Naive thymus-derived CD4-positive, alpha-beta T cell (primary cell): ENCODE measurements at regions of chr13 and their contacts with region 1.

Region 1: DNA sequence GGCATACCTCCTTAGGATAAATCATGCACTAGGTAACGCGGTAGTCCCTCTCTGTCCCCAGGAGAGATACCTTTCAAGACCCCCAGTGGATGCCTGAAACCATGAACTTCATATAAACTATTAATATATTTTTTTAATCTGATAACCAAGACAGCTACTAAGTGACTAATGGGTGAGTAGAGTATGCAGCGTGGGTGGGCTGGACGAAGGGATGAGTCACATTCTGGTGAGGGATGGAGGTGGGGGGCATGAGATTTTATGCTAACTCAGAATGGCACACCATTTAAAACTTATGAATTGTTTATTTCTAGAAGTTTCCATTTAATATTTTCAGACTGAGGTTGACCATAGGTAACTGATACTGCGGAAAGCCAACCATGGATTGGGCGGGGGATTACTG is 46.2 kb downstream of the CDK8 start:
- DNase-seq: no peak
- ATAC-seq: no peak
- H3K4me3 ChIP-seq: no peak overlapping the region
- H3K4me3 Mint-ChIP-seq: no peak overlapping the region
- H3K27ac ChIP-seq: no peak overlapping the region
- H3K27ac Mint-ChIP-seq: no peak overlapping the region
- H3K4me1 ChIP-seq: peaks cover 0 to 4% of the 10 kb centered on the region in 2 donors
- H3K4me1 Mint-ChIP-seq: peaks cover 0 to 85% (median 70%) of the 10 kb centered on the region in 7 donors
- H3K27me3 ChIP-seq: no peaks in the 10 kb centered on the region
- H3K27me3 Mint-ChIP-seq: no peaks in the 10 kb centered on the region

Region 2: GRCh38 chr13:25286969-25287961 is 1012.9 kb before region 1 on chr13 and contains the start of gene MTMR6:
- CTCF ChIA-PET with region 1: no interaction called
- POLR2A ChIA-PET with region 1: no interaction called
- intact Hi-C with region 1: no loop called
- DNase-seq: peak; percentile 90 to 98 (median 93)
- ATAC-seq: peak; percentile 96
- H3K4me3 ChIP-seq: peak within 1 kb of the TSS; percentile 85
- H3K4me3 Mint-ChIP-seq: peak within 1 kb of the TSS; percentile 94 to 100 (median 96)
- H3K27ac ChIP-seq: peak within 1 kb of the TSS; percentile 100
- H3K27ac Mint-ChIP-seq: peak within 1 kb of the TSS; percentile 92 to 99 (median 97)
- H3K4me1 ChIP-seq: peaks cover 12 to 24% of the 10 kb centered on the region in 2 donors
- H3K4me1 Mint-ChIP-seq: peaks cover 23 to 58% (median 50%) of the 10 kb centered on the region in 7 donors
- H3K27me3 ChIP-seq: peaks cover 0 to 3% of the 10 kb centered on the region in 2 donors
- H3K27me3 Mint-ChIP-seq: peaks cover 0 to 17% (median 10%) of the 10 kb centered on the region in 5 donors
- total RNA-seq, gene MTMR6: 16.0 to 23.2 (median 18.5) TPM

Region 3: GRCh38 chr13:26335158-26335557 is 35.0 kb after region 1 on chr13:
- CTCF ChIA-PET with region 1: no interaction called
- POLR2A ChIA-PET with region 1: no interaction called
- intact Hi-C with region 1: loop called in 1 of 2 experiments (anchors 5 kb)
- DNase-seq: no peak
- ATAC-seq: no peak
- H3K4me3 ChIP-seq: no peak overlapping the region
- H3K4me3 Mint-ChIP-seq: no peak overlapping the region
- H3K27ac ChIP-seq: no peak overlapping the region
- H3K27ac Mint-ChIP-seq: no peak overlapping the region
- H3K4me1 ChIP-seq: no peaks in the 10 kb centered on the region
- H3K4me1 Mint-ChIP-seq: peaks cover 0 to 46% (median 35%) of the 10 kb centered on the region in 7 donors
- H3K27me3 ChIP-seq: no peaks in the 10 kb centered on the region
- H3K27me3 Mint-ChIP-seq: no peaks in the 10 kb centered on the region

Region 4: GRCh38 chr13:26819046-26819445 is 518.9 kb after region 1 on chr13:
- CTCF ChIA-PET with region 1: no interaction called
- POLR2A ChIA-PET with region 1: no interaction called
- intact Hi-C with region 1: no loop called
- DNase-seq: no peak
- ATAC-seq: no peak
- H3K4me3 ChIP-seq: no peak overlapping the region
- H3K4me3 Mint-ChIP-seq: no peak overlapping the region
- H3K27ac ChIP-seq: no peak overlapping the region
- H3K27ac Mint-ChIP-seq: no peak overlapping the region
- H3K4me1 ChIP-seq: no peaks in the 10 kb centered on the region
- H3K4me1 Mint-ChIP-seq: no peaks in the 10 kb centered on the region
- H3K27me3 ChIP-seq: no peaks in the 10 kb centered on the region
- H3K27me3 Mint-ChIP-seq: peaks cover 0 to 18% (median 8%) of the 10 kb centered on the region in 5 donors